Posterior cingulate gyrus (tissue), 11 donors: ENCODE measurements at regions of chr1 and their contacts with region 1.

Region 1: GRCh38 chr1:112788561-112788960 is 73.4 kb upstream of the PPM1J start:
- DNase-seq: no peak

Region 2: DNA sequence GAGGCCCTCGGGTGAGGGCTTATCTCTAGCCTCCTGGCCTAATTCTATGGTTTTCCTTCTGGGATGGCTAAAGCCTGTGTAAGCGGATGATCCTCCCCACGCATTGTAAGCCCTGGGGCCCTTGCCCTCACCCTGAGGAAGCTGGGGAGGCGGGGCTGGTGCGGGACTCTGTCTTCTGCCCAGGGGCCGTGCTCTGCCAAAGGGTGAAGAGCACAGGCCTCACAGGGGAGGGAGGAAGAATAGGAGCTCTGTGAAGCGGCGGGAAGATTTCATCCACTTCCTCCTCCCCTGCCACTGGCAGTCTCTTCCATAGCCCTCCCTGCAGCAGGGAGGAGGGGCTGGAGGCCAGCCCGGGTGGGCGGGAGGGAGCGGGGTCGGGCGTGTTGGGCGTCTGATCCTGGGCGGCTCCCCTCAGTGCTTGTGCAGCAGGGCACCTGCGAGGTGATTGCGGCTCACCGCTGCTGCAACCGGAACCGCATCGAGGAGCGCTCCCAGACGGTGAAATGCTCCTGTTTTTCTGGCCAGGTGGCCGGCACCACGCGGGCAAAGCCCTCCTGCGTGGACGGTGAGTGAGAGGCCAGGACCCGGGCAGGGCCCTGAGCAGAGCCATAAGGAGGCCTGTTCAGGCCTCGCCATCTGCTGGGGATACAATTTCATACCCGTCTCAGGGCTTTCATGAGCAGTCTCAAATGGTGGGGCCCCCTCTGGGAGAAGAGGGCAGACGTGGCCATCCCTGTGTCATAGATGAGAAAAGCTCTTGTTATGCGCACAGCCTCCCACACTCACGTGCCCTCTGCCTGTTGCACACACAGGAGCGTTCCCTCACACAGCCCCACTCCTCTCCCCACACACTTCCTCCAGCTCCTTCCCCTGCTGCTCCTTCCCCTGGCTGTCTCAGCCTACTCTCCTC is 65.7 kb before region 1 on chr1:
- intact Hi-C with region 1: no loop called
- DNase-seq: peak in 1 of 10 donors; percentile 64

Region 3: DNA sequence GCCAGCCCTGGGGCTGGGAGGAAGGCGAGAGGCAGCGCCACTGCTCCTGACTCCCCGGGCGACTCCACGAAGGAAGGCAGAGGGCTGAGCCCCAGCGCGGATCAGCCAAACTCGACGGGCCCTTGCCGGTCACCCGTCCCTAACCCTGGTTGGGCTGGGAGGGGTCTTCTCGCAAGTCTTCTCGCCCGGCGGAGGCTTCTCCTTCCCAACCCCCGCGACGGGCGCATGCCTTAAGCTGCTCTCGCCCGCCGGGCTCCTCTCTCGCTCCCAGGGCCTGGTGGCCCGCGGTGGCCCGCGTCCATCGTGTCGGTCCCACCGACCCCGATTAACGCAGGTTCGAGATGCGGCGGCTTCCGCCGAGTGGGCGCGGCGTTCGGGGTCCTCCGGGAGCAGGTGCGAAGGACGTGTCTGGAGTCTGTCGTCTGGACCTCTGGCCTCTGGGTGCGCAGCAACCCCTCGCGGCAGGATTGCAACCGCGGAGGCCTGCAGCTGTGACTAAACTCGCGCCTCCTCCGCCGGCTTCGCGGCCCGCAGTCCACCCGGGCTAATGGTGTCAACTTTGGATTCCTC is 44.5 kb before region 1 on chr1:
- intact Hi-C with region 1: loop called (anchors 5 kb)
- DNase-seq: peak in 1 of 10 donors; percentile 71